Psoas muscle (tissue), 8 donors: ENCODE measurements at regions of chr18 and their contacts with region 1.

Region 1: DNA sequence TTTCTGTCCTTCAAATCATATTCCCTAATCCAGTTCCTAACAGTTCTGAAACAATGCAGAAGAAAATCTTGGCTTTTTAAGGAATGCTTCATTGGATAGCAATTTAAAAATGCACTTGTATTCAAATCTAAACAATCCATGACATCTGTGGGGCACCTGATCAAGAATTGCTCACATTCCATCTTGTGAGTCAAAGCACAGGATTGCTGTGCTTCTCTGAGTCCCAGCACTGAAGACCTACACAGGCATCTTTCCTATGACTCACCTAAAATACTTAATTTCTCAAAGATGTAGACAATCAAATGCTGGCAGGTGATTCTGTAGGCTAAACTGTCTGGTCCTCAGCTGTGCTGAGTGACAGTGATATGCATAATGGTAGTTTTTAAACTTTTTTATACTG is 10.1 kb upstream of the ATP8B1 start:
- DNase-seq: no peak
- ATAC-seq: no peak
- H3K4me3 ChIP-seq: no peak overlapping the region
- H3K27ac ChIP-seq: no peak overlapping the region
- H3K4me1 ChIP-seq: peaks cover 2% of the 10 kb centered on the region
- H3K27me3 ChIP-seq: peaks cover 0 to 2% (median 0%) of the 10 kb centered on the region in 3 donors
- CTCF ChIP-seq: no peak

Region 2: DNA sequence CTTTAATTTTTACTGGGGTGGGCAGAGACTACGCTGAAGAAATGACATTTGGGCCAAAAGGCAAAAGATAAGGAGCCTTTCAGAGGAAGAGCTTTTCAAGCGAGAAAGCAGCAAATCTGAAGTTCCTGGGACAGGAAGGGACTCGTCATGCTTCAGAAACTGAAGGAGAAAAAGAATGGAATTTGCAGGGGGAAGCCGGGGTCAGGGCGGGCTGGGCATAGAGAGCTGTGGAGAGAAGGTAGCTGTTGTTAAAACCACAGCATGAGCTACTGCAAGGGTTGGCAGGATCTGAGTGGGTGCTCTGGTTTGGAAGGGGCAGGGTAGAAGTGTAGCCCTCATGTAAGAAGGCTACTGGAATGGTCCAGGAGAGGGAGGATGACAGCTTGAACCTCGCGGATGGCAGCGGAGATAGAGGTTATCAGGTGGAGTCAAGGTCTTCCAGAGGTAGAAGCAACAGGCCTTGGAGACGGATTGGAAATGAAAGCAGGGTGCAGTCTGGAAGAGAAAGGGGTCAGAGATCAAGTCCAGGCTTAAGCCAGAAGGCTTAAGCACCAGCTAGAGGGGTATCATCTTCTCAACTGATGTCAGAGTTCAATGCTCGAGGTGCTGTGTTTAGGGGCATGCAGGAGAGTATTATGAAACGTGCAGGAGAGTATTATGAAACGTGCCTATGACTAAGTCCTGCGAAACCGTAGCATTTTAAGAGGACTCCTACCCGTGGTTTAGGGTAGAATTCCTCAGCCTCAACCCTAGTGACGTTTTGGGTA is 29.0 kb before region 1 on chr18:
- intact Hi-C with region 1: no loop called
- DNase-seq: no peak
- ATAC-seq: peak in 2 of 4 donors; percentile 14 to 38
- H3K4me3 ChIP-seq: no peak overlapping the region
- H3K27ac ChIP-seq: peak overlapping the region; percentile 36
- H3K4me1 ChIP-seq: peaks cover 63% of the 10 kb centered on the region
- H3K27me3 ChIP-seq: no peaks in the 10 kb centered on the region
- CTCF ChIP-seq: no peak

Region 3: DNA sequence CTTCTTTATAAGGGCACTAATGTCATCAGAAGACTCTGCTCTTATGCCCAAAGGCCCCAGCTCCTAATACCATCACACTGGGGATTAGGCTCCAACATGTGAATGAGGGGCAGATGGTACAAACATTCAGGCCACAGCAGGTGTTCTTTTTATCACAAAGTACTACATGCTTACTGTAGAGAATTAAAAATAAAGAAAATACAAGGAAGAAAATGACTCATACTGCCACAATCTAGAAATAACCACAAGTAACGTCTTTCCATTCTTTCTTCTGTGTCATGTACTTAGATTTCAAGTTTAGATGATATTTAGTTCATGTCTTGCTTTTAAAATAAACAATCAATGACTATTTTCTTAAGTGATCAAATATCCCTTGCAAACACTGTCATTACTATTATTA is 130.5 kb after region 1 on chr18:
- intact Hi-C with region 1: no loop called
- DNase-seq: no peak
- ATAC-seq: no peak
- H3K4me3 ChIP-seq: no peak overlapping the region
- H3K27ac ChIP-seq: no peak overlapping the region
- H3K4me1 ChIP-seq: no peaks in the 10 kb centered on the region
- H3K27me3 ChIP-seq: peaks cover 0 to 3% (median 0%) of the 10 kb centered on the region in 3 donors
- CTCF ChIP-seq: no peak

Region 4: GRCh38 chr18:58378411-58379379 is 565.5 kb after region 1 on chr18:
- intact Hi-C with region 1: no loop called
- DNase-seq: no peak
- ATAC-seq: peak in 1 of 4 donors; percentile 9
- H3K4me3 ChIP-seq: no peak overlapping the region
- H3K27ac ChIP-seq: no peak overlapping the region
- H3K4me1 ChIP-seq: no peaks in the 10 kb centered on the region
- H3K27me3 ChIP-seq: no peaks in the 10 kb centered on the region
- CTCF ChIP-seq: no peak

Region 5: GRCh38 chr18:58823412-58823811 is 1010.2 kb after region 1 on chr18:
- intact Hi-C with region 1: loop called in 1 of 2 experiments (anchors 5 kb)
- DNase-seq: no peak
- ATAC-seq: no peak
- H3K4me3 ChIP-seq: no peak overlapping the region
- H3K27ac ChIP-seq: no peak overlapping the region
- H3K4me1 ChIP-seq: no peaks in the 10 kb centered on the region
- H3K27me3 ChIP-seq: no peaks in the 10 kb centered on the region
- CTCF ChIP-seq: no peak